Testis (tissue), 5 donors: ENCODE measurements at regions of chr15 and their contacts with region 1.

Region 1: GRCh38 chr15:25739687-25740121 is 123.4 kb downstream of the ATP10A start:
- DNase-seq: peak; percentile 66
- H3K4me3 ChIP-seq: no peak overlapping the region
- H3K27ac ChIP-seq: no peak overlapping the region
- H3K4me1 ChIP-seq: peaks cover 41% of the 10 kb centered on the region
- H3K27me3 ChIP-seq: no peaks in the 10 kb centered on the region
- CTCF ChIP-seq: peak in 1 of 3 experiments; percentile 20
- POLR2A ChIP-seq: no peak

Region 2: GRCh38 chr15:25437777-25438600 is 301.7 kb before region 1 on chr15:
- intact Hi-C with region 1: no loop called
- DNase-seq: peak; percentile 58
- H3K4me3 ChIP-seq: peak overlapping the region; percentile 97 to 99
- H3K27ac ChIP-seq: peak overlapping the region; percentile 98 to 99
- H3K4me1 ChIP-seq: peaks cover 7% of the 10 kb centered on the region
- H3K27me3 ChIP-seq: no peaks in the 10 kb centered on the region
- CTCF ChIP-seq: no peak
- POLR2A ChIP-seq: no peak

Region 3: GRCh38 chr15:25661898-25662297 is 77.8 kb before region 1 on chr15:
- intact Hi-C with region 1: no loop called
- DNase-seq: no peak
- H3K4me3 ChIP-seq: no peak overlapping the region
- H3K27ac ChIP-seq: no peak overlapping the region
- H3K4me1 ChIP-seq: no peaks in the 10 kb centered on the region
- H3K27me3 ChIP-seq: no peaks in the 10 kb centered on the region
- CTCF ChIP-seq: no peak
- POLR2A ChIP-seq: no peak

Region 4: GRCh38 chr15:25849151-25849921 is 109.6 kb after region 1 on chr15:
- intact Hi-C with region 1: loop called (anchors 5 kb)
- DNase-seq: peak; percentile 40
- H3K4me3 ChIP-seq: no peak overlapping the region
- H3K27ac ChIP-seq: peak overlapping the region in 1 of 2 donors; percentile 86
- H3K4me1 ChIP-seq: peaks cover 16% of the 10 kb centered on the region
- H3K27me3 ChIP-seq: no peaks in the 10 kb centered on the region
- CTCF ChIP-seq: no peak
- POLR2A ChIP-seq: no peak